ENCODE measurements at regions of chr16 and their contacts with region 1.

Region 1: GRCh38 chr16:11977376-11978041 is 975 bp downstream of the SNX29 start:
- DNase-seq: peak in 1 of 3 donors; percentile 36
- H3K4me3 ChIP-seq: peak overlapping the region; percentile 84 to 95 (median 92)
- H3K4me3 Mint-ChIP-seq: peak overlapping the region; percentile 97 to 98
- H3K27ac ChIP-seq: peak overlapping the region in 1 of 2 donors; percentile 93
- H3K27ac Mint-ChIP-seq: peak overlapping the region; percentile 85 to 95 (median 92)
- H3K4me1 ChIP-seq: peaks cover 23 to 27% of the 10 kb centered on the region in 2 donors
- H3K4me1 Mint-ChIP-seq: peaks cover 40% of the 10 kb centered on the region
- H3K27me3 ChIP-seq: no peaks in the 10 kb centered on the region
- H3K27me3 Mint-ChIP-seq: peaks cover 0 to 2% (median 0%) of the 10 kb centered on the region in 3 donors
- CTCF ChIP-seq: no peak

Region 2: GRCh38 chr16:12010388-12011251 is 33.1 kb after region 1 on chr16:
- intact Hi-C with region 1: loop called in 1 of 2 experiments (anchors 5 kb)
- DNase-seq: peak; percentile 62 to 77 (median 62)
- H3K4me3 ChIP-seq: peak overlapping the region; percentile 11 to 53 (median 25)
- H3K4me3 Mint-ChIP-seq: peak overlapping the region; percentile 58 to 81
- H3K27ac ChIP-seq: peak overlapping the region; percentile 82 to 83
- H3K27ac Mint-ChIP-seq: peak overlapping the region; percentile 88 to 97 (median 94)
- H3K4me1 ChIP-seq: peaks cover 20 to 25% of the 10 kb centered on the region in 2 donors
- H3K4me1 Mint-ChIP-seq: peaks cover 25% of the 10 kb centered on the region
- H3K27me3 ChIP-seq: no peaks in the 10 kb centered on the region
- H3K27me3 Mint-ChIP-seq: peaks cover 0 to 2% (median 0%) of the 10 kb centered on the region in 3 donors
- CTCF ChIP-seq: no peak

Region 3: GRCh38 chr16:12026741-12027490 is 49.4 kb after region 1 on chr16:
- intact Hi-C with region 1: no loop called
- DNase-seq: no peak
- H3K4me3 ChIP-seq: no peak overlapping the region
- H3K4me3 Mint-ChIP-seq: no peak overlapping the region
- H3K27ac ChIP-seq: no peak overlapping the region
- H3K27ac Mint-ChIP-seq: peak overlapping the region in 1 of 7 donors; percentile 8
- H3K4me1 ChIP-seq: peaks cover 0 to 1% of the 10 kb centered on the region in 2 donors
- H3K4me1 Mint-ChIP-seq: peaks cover 24% of the 10 kb centered on the region
- H3K27me3 ChIP-seq: no peaks in the 10 kb centered on the region
- H3K27me3 Mint-ChIP-seq: peaks cover 0 to 2% (median 0%) of the 10 kb centered on the region in 3 donors
- CTCF ChIP-seq: no peak

Region 4: DNA sequence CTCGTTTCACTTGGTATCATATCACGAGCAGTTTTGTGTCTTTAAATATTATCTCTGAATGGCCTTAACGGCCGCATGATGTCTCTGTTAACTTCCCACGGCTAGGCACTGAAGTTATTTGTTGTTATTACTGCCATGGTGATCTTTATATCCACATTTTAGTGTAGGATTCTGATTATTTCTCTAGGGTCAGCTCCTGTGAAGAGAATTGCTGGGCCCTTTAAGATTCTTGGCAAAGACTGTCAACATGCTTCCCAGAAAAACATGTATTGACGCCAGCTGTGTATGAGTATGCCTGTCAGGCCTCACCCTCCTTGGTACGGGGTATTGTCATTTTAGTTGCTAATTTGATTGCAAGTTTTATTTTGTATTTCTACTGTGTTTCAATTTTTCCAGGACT is 262.5 kb after region 1 on chr16:
- intact Hi-C with region 1: no loop called
- DNase-seq: no peak
- H3K4me3 ChIP-seq: no peak overlapping the region
- H3K4me3 Mint-ChIP-seq: no peak overlapping the region
- H3K27ac ChIP-seq: no peak overlapping the region
- H3K27ac Mint-ChIP-seq: no peak overlapping the region
- H3K4me1 ChIP-seq: no peaks in the 10 kb centered on the region
- H3K4me1 Mint-ChIP-seq: peaks cover 1% of the 10 kb centered on the region
- H3K27me3 ChIP-seq: no peaks in the 10 kb centered on the region
- H3K27me3 Mint-ChIP-seq: peaks cover 0 to 2% (median 2%) of the 10 kb centered on the region in 3 donors
- CTCF ChIP-seq: no peak